Activated CD4-positive, alpha-beta T cell treated with anti-CD3 and anti-CD28 coated beads, Interleukin-2, amount 10 ng/mL, durations not matched to agents 7 days and 5 days (primary cell): ENCODE measurements at regions of chr14 and their contacts with region 1.

Region 1: GRCh38 chr14:76386915-76387782 is 11.2 kb downstream of the ESRRB start:
- DNase-seq: peak; percentile 71
- H3K4me3 Mint-ChIP-seq: no peak overlapping the region
- H3K27ac Mint-ChIP-seq: no peak overlapping the region
- H3K4me1 Mint-ChIP-seq: no peaks in the 10 kb centered on the region
- H3K27me3 Mint-ChIP-seq: peaks cover 38% of the 10 kb centered on the region

Region 2: DNA sequence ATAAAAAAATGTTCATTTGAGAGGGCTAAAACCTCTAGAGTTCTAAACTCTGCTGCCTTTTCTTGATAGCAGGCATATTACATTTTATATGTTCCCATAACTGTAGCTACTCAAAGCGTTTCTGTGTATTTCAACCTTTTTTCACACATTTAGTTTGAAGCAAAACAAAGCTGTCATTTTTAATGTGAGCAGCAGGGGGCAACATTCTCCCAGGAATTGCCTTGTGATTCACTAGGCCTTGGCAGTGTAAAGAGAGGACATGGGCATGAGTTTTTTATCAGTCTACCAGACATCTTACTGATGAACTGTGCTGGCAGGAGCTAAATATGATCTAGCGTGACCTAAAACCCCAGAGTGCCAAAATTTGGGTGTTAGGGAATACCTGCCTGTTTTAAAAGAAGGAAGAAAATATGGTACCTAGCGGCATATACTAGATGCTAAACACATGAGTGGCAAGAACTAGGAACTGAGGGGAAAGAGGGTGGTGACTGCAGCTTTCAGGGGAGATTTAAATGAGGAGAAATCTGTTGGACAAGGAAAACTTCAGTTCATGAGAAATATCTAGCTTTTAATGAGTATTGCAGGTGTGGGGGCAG is 336.3 kb before region 1 on chr14:
- CTCF ChIA-PET with region 1: interaction called, 12 read pairs
- POLR2A ChIA-PET with region 1: no interaction called
- DNase-seq: peak; percentile 71
- H3K4me3 Mint-ChIP-seq: no peak overlapping the region
- H3K27ac Mint-ChIP-seq: no peak overlapping the region
- H3K4me1 Mint-ChIP-seq: peaks cover 1% of the 10 kb centered on the region
- H3K27me3 Mint-ChIP-seq: no peaks in the 10 kb centered on the region